GM12878 (cell line): ENCODE measurements at regions of chr6 and their contacts with region 1.

Region 1: GRCh38 chr6:16836144-16836981 is 75.1 kb upstream of the ATXN1 start:
- DNase-seq: peak; percentile 77
- ATAC-seq: peak; percentile 80
- H3K4me3 ChIP-seq: peak overlapping the region; percentile 37; the same call in 1 of the 2 replicates
- H3K27ac ChIP-seq: peak overlapping the region; percentile 57
- H3K4me1 ChIP-seq: peaks cover 36% of the 10 kb centered on the region
- H3K27me3 ChIP-seq: no peaks in the 10 kb centered on the region
- CTCF ChIP-seq: no peak
- EP300 ChIP-seq: peak; percentile 31 to 62; a peak in 3 of 4 replicates
- POLR2A ChIP-seq: no peak
- RAD21 ChIP-seq: no peak

Region 2: DNA sequence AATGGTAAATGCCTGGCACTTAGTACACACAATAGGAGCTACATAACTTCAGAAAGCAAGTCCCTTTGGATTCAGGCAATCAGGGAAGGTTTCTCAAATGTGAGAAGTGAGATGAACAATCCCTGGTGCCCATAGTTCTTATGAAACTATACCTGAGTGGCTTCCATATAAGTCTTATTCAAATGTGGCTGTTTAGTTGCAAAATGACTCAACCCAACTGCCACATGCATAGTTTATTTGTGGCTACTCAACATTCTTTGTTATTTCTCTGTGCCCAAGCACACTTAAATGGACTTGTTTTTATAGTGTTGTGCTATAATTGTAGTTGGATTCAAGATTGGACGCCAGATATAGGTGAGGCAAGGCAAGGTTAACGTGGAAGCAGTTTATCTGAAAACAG is 18.6 kb after region 1 on chr6:
- CTCF ChIA-PET with region 1: no interaction called
- POLR2A ChIA-PET with region 1: interaction called, 6 read pairs
- RAD21 ChIA-PET with region 1: interaction called, 7 read pairs
- SMC1A ChIA-PET with region 1: interaction called, 13 read pairs
- in situ Hi-C with region 1: no loop called
- intact Hi-C with region 1: loop called (anchors 1 kb)
- DNase-seq: peak; percentile 59
- ATAC-seq: peak; percentile 93
- H3K4me3 ChIP-seq: no peak overlapping the region
- H3K27ac ChIP-seq: peak overlapping the region; percentile 4; the same call in 1 of the 2 replicates
- H3K4me1 ChIP-seq: peaks cover 35% of the 10 kb centered on the region
- H3K27me3 ChIP-seq: no peaks in the 10 kb centered on the region
- CTCF ChIP-seq: no peak
- EP300 ChIP-seq: 0 out of 4 replicates have a peak, but pooled peaks of 1 of the 2 experiments have one; percentile 14
- POLR2A ChIP-seq: no peak
- RAD21 ChIP-seq: no peak